Activated CD4-positive, alpha-beta T cell treated with anti-CD3 and anti-CD28 coated beads, Interleukin-2, amount 10 ng/mL, durations not matched to agents 24 days and 14 days (primary cell): ENCODE measurements at regions of chrX and their contacts with region 1.

Region 1: GRCh38 chrX:104113222-104113965 is 1.1 kb downstream of the ZCCHC18 start:
- DNase-seq: peak; percentile 81
- H3K4me3 Mint-ChIP-seq: peak overlapping the region; percentile 88
- H3K27ac Mint-ChIP-seq: peak overlapping the region; percentile 47
- H3K4me1 Mint-ChIP-seq: peaks cover 18% of the 10 kb centered on the region
- H3K27me3 Mint-ChIP-seq: peaks cover 2% of the 10 kb centered on the region

Region 2: DNA sequence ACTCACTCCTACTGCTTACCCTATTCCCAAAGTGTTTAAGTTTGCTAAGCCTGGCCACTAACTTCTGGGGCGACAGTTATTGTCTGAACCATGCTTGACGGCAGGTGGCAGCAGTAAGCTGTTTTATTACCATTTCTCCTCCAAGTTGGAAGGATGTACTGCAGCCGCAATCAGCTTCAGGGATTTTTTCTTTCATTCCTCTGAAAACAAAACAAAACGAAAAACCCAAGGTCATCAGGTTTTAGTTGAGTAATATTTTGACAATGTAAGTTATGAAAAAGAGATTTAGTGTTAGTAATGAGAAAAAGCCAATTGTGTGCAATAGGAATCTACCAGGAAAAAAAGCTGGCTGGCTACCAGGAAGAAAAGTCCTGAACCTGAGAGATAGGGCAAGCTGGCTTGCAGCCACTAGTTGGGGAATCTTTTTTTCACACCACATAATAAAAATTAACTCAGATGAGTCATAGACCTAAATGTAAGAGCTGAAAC is 268.2 kb before region 1 on chrX:
- intact Hi-C with region 1: loop called (anchors 5 kb)
- DNase-seq: peak; percentile 82
- H3K4me3 Mint-ChIP-seq: no peak overlapping the region
- H3K27ac Mint-ChIP-seq: no peak overlapping the region
- H3K4me1 Mint-ChIP-seq: peaks cover 2% of the 10 kb centered on the region
- H3K27me3 Mint-ChIP-seq: no peaks in the 10 kb centered on the region

Region 3: GRCh38 chrX:104098151-104098808 is 15.1 kb before region 1 on chrX:
- intact Hi-C with region 1: loop called (anchors 1 kb)
- DNase-seq: peak; percentile 79
- H3K4me3 Mint-ChIP-seq: no peak overlapping the region
- H3K27ac Mint-ChIP-seq: no peak overlapping the region
- H3K4me1 Mint-ChIP-seq: no peaks in the 10 kb centered on the region
- H3K27me3 Mint-ChIP-seq: peaks cover 13% of the 10 kb centered on the region

Region 4: DNA sequence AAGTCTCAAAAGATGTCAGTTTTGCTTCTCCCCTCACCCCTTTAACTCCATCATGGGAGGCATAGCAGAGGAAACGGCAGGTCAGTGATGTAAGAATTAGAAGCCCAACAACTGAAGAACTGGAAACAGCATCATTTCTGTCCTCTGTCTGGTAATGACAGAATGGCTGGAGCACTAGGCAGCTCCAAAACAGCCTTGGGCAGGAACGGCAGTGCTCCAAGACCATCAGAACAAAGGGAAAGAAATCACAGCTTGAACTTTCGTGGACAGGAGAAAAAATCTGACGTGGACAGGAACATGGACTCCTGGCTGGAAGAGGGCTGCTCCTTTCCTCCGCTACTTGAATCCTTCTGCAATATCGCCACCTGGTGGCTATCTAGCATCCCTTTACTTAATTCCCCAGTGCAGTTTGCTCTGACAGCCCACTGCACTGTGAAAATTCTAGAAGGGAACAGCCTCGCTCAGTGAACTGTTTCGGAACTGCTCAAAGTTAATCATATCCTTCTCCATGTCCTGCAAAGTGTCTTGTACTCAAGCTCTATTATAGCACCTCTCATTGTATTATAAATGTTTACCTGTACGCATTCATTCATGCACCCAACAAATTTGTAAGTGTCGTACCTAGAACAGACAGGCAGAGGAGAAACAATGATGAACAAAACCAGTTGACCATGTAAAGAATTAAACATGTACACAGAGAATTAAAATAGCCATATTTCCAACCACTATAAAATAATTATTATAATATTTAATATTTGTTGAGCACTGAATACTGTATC is 23.0 kb after region 1 on chrX:
- intact Hi-C with region 1: loop called (anchors 2 kb)
- DNase-seq: peak; percentile 84
- H3K4me3 Mint-ChIP-seq: no peak overlapping the region
- H3K27ac Mint-ChIP-seq: no peak overlapping the region
- H3K4me1 Mint-ChIP-seq: peaks cover 15% of the 10 kb centered on the region
- H3K27me3 Mint-ChIP-seq: no peaks in the 10 kb centered on the region

Region 5: GRCh38 chrX:104156630-104157529 is 43.5 kb after region 1 on chrX and contains the start of gene SLC25A53:
- intact Hi-C with region 1: no loop called
- DNase-seq: peak; percentile 92
- H3K4me3 Mint-ChIP-seq: peak within 1 kb of the TSS; percentile 98
- H3K27ac Mint-ChIP-seq: peak within 1 kb of the TSS; percentile 99
- H3K4me1 Mint-ChIP-seq: peaks cover 7% of the 10 kb centered on the region
- H3K27me3 Mint-ChIP-seq: no peaks in the 10 kb centered on the region
- total RNA-seq, gene SLC25A53: 4.2 and 4.3 TPM in 2 replicates